Activated T-helper 1 cell treated with anti-CD3 and anti-CD28 coated beads, Interleukin-12 subunit alpha, Interleukin-12 subunit beta, Interleukin-2, Interleukin-4 antibody, amounts not matched to agents 30 ng/mL and 10 ng/mL and 1 ng/mL, durations not matched to agents 14 hours and 24 hours and 36 hours (primary cell): ENCODE measurements at regions of chr4 and their contacts with region 1.

Region 1: DNA sequence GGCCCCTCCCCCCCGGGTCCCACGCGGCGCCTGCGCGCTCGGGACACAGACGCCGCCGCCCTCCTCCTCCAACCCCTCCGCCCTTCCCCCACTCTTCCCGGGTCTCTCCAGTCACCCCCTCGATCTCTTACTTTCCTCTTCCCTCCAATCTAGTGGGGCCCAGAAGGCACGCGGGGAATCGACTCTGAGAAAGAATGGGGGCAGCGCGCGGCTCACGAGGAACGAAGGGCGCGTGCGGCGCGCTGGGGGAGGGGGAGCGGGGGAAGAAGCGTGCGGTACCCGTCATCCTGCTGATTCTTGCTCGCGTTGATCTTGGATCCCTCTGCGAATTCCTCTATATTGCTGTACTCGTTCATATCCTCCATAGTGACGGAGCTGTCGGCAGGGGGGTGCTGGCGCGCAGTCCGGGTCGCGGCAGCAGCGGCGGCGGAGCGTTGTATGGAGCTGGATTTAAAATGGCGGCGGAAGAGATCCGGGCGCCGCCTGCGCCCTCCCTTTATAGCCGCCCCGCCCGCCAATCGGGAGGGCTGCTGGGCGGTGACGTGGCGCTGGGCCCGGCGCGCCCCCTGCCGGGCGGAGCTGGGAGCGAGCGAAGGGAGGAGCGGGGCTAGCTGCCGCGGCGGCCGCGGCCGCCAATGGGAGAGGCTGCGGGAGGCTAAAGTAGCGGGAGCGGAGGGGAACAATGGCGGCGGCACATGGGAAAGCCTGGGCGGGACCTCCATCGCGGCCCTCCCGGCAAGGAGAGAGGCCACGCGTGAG is 1.1 kb downstream of the HNRNPDL start:
- DNase-seq: peak; percentile 90
- H3K4me3 Mint-ChIP-seq: peak overlapping the region; percentile 99
- H3K27ac Mint-ChIP-seq: peak overlapping the region; percentile 99
- H3K4me1 Mint-ChIP-seq: peaks cover 69% of the 10 kb centered on the region
- H3K27me3 Mint-ChIP-seq: no peaks in the 10 kb centered on the region

Region 2: GRCh38 chr4:82284858-82285805 is 144.0 kb before region 1 on chr4:
- intact Hi-C with region 1: loop called (anchors 1 kb)
- DNase-seq: peak; percentile 99
- H3K4me3 Mint-ChIP-seq: peak overlapping the region; percentile 80
- H3K27ac Mint-ChIP-seq: peak overlapping the region; percentile 27
- H3K4me1 Mint-ChIP-seq: peaks cover 14% of the 10 kb centered on the region
- H3K27me3 Mint-ChIP-seq: peaks cover 24% of the 10 kb centered on the region

Region 3: GRCh38 chr4:82373816-82374625 is 55.1 kb before region 1 on chr4 and contains the start of gene HNRNPD:
- intact Hi-C with region 1: loop called (anchors 1 kb)
- DNase-seq: peak; percentile 92
- H3K4me3 Mint-ChIP-seq: peak within 1 kb of the TSS; percentile 99
- H3K27ac Mint-ChIP-seq: peak within 1 kb of the TSS; percentile 100
- H3K4me1 Mint-ChIP-seq: peaks cover 37% of the 10 kb centered on the region
- H3K27me3 Mint-ChIP-seq: peaks cover 2% of the 10 kb centered on the region
- total RNA-seq, gene HNRNPD: 434 and 438 TPM in 2 replicates

Region 4: GRCh38 chr4:82865592-82865991 is 436.4 kb after region 1 on chr4:
- intact Hi-C with region 1: loop called (anchors 1 kb)
- DNase-seq: peak; percentile 24
- H3K4me3 Mint-ChIP-seq: no peak overlapping the region
- H3K27ac Mint-ChIP-seq: peak overlapping the region; percentile 91
- H3K4me1 Mint-ChIP-seq: peaks cover 48% of the 10 kb centered on the region
- H3K27me3 Mint-ChIP-seq: no peaks in the 10 kb centered on the region

Region 5: GRCh38 chr4:83012687-83013419 is 583.7 kb after region 1 on chr4:
- intact Hi-C with region 1: loop called (anchors 2 kb)
- DNase-seq: peak; percentile 97
- H3K4me3 Mint-ChIP-seq: peak overlapping the region; percentile 91
- H3K27ac Mint-ChIP-seq: peak overlapping the region; percentile 92
- H3K4me1 Mint-ChIP-seq: peaks cover 45% of the 10 kb centered on the region
- H3K27me3 Mint-ChIP-seq: no peaks in the 10 kb centered on the region

Region 6: DNA sequence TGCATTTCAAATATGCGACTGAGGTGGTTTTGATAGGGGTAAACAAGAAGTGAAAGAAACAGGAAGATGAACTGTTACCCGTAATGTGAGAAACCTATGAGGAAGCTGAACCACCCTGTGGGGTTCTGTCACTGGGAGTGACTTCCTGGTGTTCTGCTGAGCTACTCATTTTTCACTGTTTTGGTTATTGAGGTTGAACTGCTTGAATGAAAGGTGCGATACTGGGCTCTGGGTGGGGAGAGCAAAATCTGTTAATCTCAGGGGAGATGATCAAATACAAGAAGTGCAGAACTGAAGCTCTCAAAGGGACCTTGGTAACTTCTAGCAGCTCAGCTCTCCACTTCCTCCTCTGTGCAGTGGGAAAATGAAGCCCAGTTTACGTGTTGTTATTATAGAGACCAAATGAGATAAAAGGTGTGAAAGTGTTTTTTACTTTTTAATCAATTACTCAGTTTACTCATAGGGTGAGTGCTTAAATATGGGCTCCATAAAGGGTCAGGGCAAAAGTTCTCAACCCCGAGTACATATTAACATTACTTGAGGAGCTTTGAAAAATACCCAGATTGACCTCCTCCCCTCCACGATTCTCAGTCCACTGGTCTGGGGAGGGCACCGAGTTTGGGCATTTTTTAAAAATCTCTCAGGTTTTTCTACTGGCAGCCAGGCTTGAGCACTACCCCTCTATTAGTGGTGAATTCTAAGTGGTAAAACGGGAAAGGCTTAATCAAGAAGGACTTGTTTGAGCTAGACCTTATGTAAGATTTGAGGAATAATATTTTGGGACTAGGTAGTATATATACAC is 788.8 kb after region 1 on chr4:
- intact Hi-C with region 1: loop called (anchors 10 kb)
- DNase-seq: peak; percentile 73
- H3K4me3 Mint-ChIP-seq: peak overlapping the region; percentile 66
- H3K27ac Mint-ChIP-seq: peak overlapping the region; percentile 91
- H3K4me1 Mint-ChIP-seq: peaks cover 81% of the 10 kb centered on the region
- H3K27me3 Mint-ChIP-seq: peaks cover 2% of the 10 kb centered on the region